Naive thymus-derived CD8-positive, alpha-beta T cell (primary cell): ENCODE measurements at regions of chr3 and their contacts with region 1.

Region 1: GRCh38 chr3:42502429-42503250 is at the start of gene VIPR1:
- DNase-seq: peak; percentile 89 to 97 (median 95)
- ATAC-seq: peak; percentile 91 to 93
- H3K4me3 Mint-ChIP-seq: peak within 1 kb of the TSS; percentile 84 to 99 (median 96)
- H3K27ac Mint-ChIP-seq: peak within 1 kb of the TSS; percentile 83 to 97 (median 92)
- H3K4me1 Mint-ChIP-seq: peaks cover 32 to 69% (median 53%) of the 10 kb centered on the region in 4 donors
- H3K27me3 Mint-ChIP-seq: peaks cover 2 to 39% (median 17%) of the 10 kb centered on the region in 5 donors
- polyA plus RNA-seq, gene VIPR1: 16.2 to 40.3 (median 28.8) TPM

Region 2: DNA sequence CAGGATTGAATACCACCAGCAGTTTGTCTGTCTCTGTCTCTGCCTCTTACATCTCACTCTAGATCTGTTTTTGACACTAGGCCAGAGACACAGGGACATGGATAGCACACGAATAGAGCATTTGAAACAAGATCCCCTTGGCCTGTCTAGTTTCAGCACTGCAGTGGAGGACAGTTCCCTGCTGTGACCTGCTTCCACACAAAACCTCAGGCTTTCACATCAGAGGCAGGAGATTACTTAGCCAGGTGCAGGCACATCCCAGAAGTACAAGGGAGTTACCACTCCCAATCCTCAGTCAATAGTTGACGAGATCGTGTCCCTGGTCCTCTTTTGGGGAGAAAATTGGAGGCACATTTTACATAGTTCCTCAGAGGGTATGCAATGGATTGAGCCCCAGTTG is 202.6 kb before region 1 on chr3:
- POLR2A ChIA-PET with region 1: no interaction called
- DNase-seq: peak in 5 of 10 donors; percentile 4 to 36 (median 11)
- ATAC-seq: peak in 1 of 2 donors; percentile 33
- H3K4me3 Mint-ChIP-seq: no peak overlapping the region
- H3K27ac Mint-ChIP-seq: no peak overlapping the region
- H3K4me1 Mint-ChIP-seq: peaks cover 7 to 28% (median 13%) of the 10 kb centered on the region in 4 donors
- H3K27me3 Mint-ChIP-seq: peaks cover 0 to 11% (median 0%) of the 10 kb centered on the region in 5 donors

Region 3: GRCh38 chr3:42526616-42527367 is 24.2 kb after region 1 on chr3:
- POLR2A ChIA-PET with region 1: interaction called, 89 read pairs
- DNase-seq: peak in 9 of 10 donors; percentile 29 to 70 (median 52)
- ATAC-seq: peak; percentile 88 to 89
- H3K4me3 Mint-ChIP-seq: peak overlapping the region in 9 of 10 donors; percentile 11 to 87 (median 74)
- H3K27ac Mint-ChIP-seq: peak overlapping the region; percentile 79 to 98 (median 95)
- H3K4me1 Mint-ChIP-seq: peaks cover 38 to 81% (median 70%) of the 10 kb centered on the region in 4 donors
- H3K27me3 Mint-ChIP-seq: no peaks in the 10 kb centered on the region

Region 4: DNA sequence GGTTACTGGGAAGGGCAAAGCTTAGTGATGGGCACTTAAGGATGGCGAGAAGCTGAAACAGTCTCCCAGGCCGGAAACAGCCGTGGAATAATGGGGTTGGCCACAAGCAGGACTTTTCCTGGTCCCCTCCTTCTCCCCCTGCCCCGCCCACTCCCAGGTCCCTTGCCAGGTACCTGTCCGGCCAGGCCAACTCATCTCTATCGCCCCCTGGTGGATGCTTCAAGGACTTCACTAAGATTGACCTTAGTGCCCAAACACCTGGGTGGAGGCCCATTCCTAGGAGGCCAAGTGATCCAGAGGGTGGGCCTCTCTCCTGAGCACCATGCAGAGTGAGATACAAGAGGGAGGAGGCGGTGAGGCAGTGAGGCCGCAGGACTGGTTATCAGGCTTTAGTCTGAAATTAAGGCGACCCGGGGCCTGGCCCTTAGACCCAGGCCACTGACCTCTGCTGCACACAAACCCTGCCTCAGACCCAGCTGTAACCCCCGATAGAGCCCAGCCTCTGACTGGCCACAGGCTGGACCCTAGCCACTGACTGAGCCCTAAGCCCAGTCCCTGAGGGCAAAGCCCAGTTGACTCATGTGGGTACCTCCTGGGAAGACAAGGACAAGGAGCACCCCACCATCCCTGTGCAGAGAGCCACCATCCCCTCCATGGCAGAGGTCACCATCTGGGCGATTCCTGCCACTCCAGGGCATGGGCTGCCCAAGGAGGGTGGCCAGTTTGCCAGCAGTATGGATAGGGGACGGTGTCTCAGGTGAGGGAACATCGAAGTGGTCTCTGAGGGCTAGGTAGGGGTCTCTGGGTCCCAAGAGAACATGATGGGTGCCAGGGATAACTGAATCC is 37.5 kb after region 1 on chr3:
- POLR2A ChIA-PET with region 1: interaction called, 89 read pairs
- DNase-seq: peak; percentile 32 to 80 (median 50)
- ATAC-seq: peak; percentile 52 to 74
- H3K4me3 Mint-ChIP-seq: no peak overlapping the region
- H3K27ac Mint-ChIP-seq: peak overlapping the region in 7 of 10 donors; percentile 4 to 90 (median 86)
- H3K4me1 Mint-ChIP-seq: peaks cover 14 to 35% (median 25%) of the 10 kb centered on the region in 4 donors
- H3K27me3 Mint-ChIP-seq: no peaks in the 10 kb centered on the region

Region 5: DNA sequence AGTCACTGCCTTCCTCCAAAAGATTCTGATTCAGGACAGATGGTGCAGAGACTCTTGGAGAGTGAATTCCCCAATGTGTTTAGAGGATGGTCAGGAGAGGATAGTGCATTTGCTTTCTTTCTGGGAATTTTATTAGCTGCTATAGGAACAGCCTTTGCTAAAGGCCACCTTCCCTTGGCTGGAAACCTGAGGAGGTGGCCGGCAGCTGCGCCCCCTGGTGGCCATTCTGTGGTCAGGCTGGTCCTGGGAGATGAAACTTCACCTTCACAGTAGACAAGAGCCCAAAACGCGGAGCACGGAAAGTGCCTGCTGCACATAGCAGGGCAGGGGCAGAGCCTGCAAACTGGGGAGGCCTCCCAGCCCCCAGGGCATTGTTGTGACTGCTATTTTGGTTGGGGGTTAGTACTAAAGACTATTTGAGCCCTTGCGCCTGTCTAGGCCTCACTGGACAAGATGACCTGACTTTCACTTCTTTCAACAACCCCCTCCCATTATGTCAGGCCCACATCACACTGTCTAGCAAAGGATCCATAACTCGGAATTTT is 44.8 kb after region 1 on chr3:
- POLR2A ChIA-PET with region 1: interaction called, 24 read pairs
- DNase-seq: peak; percentile 35 to 76 (median 62)
- ATAC-seq: peak; percentile 75 to 92
- H3K4me3 Mint-ChIP-seq: no peak overlapping the region
- H3K27ac Mint-ChIP-seq: peak overlapping the region in 4 of 10 donors; percentile 20 to 73 (median 41)
- H3K4me1 Mint-ChIP-seq: peaks cover 0 to 7% (median 2%) of the 10 kb centered on the region in 4 donors
- H3K27me3 Mint-ChIP-seq: no peaks in the 10 kb centered on the region

Region 6: DNA sequence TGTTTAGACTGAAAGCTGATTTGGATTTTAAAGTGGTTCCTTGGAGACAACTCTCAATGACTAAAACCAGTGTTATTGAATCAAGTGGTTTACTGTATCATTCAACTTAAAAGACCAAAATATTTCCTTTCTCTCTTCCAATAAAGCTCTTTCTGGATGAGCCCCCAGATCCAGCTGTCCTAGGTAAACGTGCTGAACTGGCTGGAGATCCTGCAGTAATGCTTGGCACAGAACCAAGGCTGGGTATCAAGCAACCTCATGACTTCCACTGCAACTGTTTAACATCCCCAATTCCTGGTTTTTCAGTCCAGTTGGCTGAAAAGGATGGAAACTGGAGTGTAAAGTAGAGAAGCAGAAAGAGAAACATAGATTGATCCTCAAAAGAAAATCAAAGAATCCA is 50.2 kb after region 1 on chr3:
- POLR2A ChIA-PET with region 1: interaction called, 24 read pairs
- DNase-seq: no peak
- ATAC-seq: no peak
- H3K4me3 Mint-ChIP-seq: no peak overlapping the region
- H3K27ac Mint-ChIP-seq: peak overlapping the region in 2 of 10 donors; percentile 23 to 42
- H3K4me1 Mint-ChIP-seq: peaks cover 15 to 30% (median 24%) of the 10 kb centered on the region in 4 donors
- H3K27me3 Mint-ChIP-seq: no peaks in the 10 kb centered on the region

Region 7: GRCh38 chr3:42575137-42575741 is 72.6 kb after region 1 on chr3:
- POLR2A ChIA-PET with region 1: no interaction called
- DNase-seq: no peak
- ATAC-seq: no peak
- H3K4me3 Mint-ChIP-seq: no peak overlapping the region
- H3K27ac Mint-ChIP-seq: no peak overlapping the region
- H3K4me1 Mint-ChIP-seq: peaks cover 15 to 37% (median 25%) of the 10 kb centered on the region in 4 donors
- H3K27me3 Mint-ChIP-seq: no peaks in the 10 kb centered on the region

Region 8: GRCh38 chr3:42755681-42756578 is 253.3 kb after region 1 on chr3:
- POLR2A ChIA-PET with region 1: no interaction called
- DNase-seq: no peak
- ATAC-seq: peak; percentile 44 to 59
- H3K4me3 Mint-ChIP-seq: no peak overlapping the region
- H3K27ac Mint-ChIP-seq: no peak overlapping the region
- H3K4me1 Mint-ChIP-seq: peaks cover 0 to 3% (median 2%) of the 10 kb centered on the region in 4 donors
- H3K27me3 Mint-ChIP-seq: peaks cover 0 to 19% (median 7%) of the 10 kb centered on the region in 5 donors